CD8-positive, alpha-beta T cell (primary cell): ENCODE measurements at regions of chr6 and their contacts with region 1.

Region 1: GRCh38 chr6:118394106-118394505 is 154.0 kb upstream of the PLN start:
- DNase-seq: no peak
- ATAC-seq: no peak
- H3K4me3 ChIP-seq: no peak overlapping the region
- H3K4me3 Mint-ChIP-seq: no peak overlapping the region
- H3K27ac ChIP-seq: no peak overlapping the region
- H3K27ac Mint-ChIP-seq: no peak overlapping the region
- H3K4me1 ChIP-seq: no peaks in the 10 kb centered on the region
- H3K4me1 Mint-ChIP-seq: peaks cover 4% of the 10 kb centered on the region
- H3K27me3 ChIP-seq: no peaks in the 10 kb centered on the region
- H3K27me3 Mint-ChIP-seq: no peaks in the 10 kb centered on the region
- CTCF ChIP-seq: no peak

Region 2: DNA sequence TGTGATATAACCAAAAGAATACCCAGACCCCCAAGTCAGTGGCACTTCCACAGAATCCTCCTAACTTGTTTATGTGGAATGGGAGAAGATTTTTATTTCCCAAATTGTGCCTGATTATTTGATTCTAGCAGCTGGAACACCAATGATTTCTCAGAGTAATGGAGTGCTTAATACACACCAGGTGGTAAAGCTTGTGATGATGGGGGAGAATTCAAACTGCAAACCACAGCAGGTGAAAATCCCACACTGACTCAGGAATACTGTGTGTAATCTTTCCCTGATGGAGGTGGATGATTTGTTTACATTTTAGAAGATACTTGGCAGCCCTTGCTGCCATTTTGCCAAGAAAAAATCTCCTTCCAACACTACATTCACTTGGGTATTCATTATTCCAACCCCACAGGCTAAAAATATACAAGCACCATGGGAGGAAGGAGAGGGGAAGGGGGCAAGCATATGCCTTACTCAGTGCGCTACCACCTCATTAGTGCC is 58.7 kb before region 1 on chr6:
- CTCF ChIA-PET with region 1: interaction called, 4 read pairs
- POLR2A ChIA-PET with region 1: no interaction called
- intact Hi-C with region 1: loop called in 1 of 2 experiments (anchors 2 kb)
- DNase-seq: no peak
- ATAC-seq: no peak
- H3K4me3 ChIP-seq: no peak overlapping the region
- H3K4me3 Mint-ChIP-seq: no peak overlapping the region
- H3K27ac ChIP-seq: no peak overlapping the region
- H3K27ac Mint-ChIP-seq: no peak overlapping the region
- H3K4me1 ChIP-seq: no peaks in the 10 kb centered on the region
- H3K4me1 Mint-ChIP-seq: no peaks in the 10 kb centered on the region
- H3K27me3 ChIP-seq: no peaks in the 10 kb centered on the region
- H3K27me3 Mint-ChIP-seq: no peaks in the 10 kb centered on the region
- CTCF ChIP-seq: no peak